ENCODE measurements at regions of chr12 and their contacts with region 1.

Region 1: DNA sequence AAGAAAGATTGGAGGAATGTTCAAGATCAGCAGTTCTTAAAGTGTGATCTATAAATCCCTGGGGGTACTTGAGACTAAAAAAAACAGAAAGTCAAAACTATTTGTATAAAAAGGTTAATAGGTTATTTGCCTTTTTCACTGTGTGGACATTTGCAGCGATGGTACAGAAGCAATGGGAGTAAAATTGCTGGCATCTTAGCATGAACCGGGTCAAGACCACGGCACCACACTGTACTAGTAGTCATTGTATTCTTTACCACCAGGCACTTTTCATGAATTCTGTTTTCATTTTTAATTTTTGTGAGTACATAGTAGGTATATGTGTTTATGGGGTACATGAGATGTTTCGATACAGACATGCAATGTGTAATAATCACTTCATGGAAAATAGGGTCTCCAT is 126.2 kb downstream of the IPO8 start:
- DNase-seq: no peak
- ATAC-seq: no peak
- H3K4me3 ChIP-seq: no peak overlapping the region
- H3K27ac ChIP-seq: no peak overlapping the region
- H3K4me1 ChIP-seq: no peaks in the 10 kb centered on the region
- H3K27me3 ChIP-seq: no peaks in the 10 kb centered on the region
- CTCF ChIP-seq: no peak

Region 2: GRCh38 chr12:30525171-30525570 is 44.3 kb before region 1 on chr12:
- intact Hi-C with region 1: no loop called
- DNase-seq: no peak
- ATAC-seq: no peak
- H3K4me3 ChIP-seq: no peak overlapping the region
- H3K27ac ChIP-seq: no peak overlapping the region
- H3K4me1 ChIP-seq: no peaks in the 10 kb centered on the region
- H3K27me3 ChIP-seq: no peaks in the 10 kb centered on the region
- CTCF ChIP-seq: no peak

Region 3: GRCh38 chr12:30548203-30548602 is 21.2 kb before region 1 on chr12:
- intact Hi-C with region 1: loop called in 1 of 10 experiments (anchors 1 kb)
- DNase-seq: no peak
- ATAC-seq: no peak
- H3K4me3 ChIP-seq: no peak overlapping the region
- H3K27ac ChIP-seq: no peak overlapping the region
- H3K4me1 ChIP-seq: no peaks in the 10 kb centered on the region
- H3K27me3 ChIP-seq: no peaks in the 10 kb centered on the region
- CTCF ChIP-seq: no peak

Measured in heart right ventricle (tissue), 16 donors.